MCF 10A (cell line): ENCODE measurements at regions of chr2 and their contacts with region 1.

Region 1: DNA sequence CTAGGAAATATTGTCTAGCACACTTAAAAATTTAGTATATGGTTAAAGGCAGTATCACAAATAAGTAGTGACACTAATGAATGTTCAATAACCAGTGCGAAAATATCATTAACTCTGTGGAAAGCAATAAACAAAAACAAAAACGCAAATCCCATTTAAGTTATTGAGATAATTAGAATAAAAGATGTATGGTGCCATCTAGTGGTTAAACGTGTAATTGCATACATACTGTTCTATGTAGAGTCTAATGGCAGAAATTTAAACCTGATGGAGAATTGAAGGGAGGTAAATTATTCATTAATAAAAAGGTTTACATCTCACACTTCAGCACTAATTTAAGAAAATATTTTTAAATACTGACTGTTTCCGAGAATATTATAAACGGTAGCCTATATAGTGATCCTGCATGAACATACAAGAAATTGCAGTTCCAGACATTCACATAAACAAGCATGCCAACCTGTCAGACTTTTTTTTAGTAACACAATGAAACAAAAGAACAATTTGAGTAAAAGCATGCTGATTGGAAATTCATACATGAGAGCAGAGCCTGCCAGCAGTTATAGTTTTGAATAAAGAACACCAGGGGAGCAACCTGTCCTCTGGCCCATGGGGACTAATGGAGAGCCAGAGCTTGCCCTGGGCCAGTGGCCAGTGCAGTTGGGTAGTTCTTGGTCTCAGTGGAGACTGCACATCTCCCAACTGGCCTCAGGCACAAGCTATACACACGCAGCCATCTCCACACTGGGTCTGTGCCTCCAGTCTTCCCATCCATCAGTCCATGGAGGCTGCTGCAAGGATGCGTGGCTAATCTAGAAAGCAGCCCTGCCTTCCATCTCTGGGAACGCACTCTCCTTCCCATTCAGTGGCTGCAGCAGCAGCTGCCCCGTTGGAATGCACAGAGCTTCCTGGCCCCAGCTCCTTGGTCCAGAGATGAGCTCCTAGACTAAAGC is 28.0 kb downstream of the GCG start:
- DNase-seq: peak; percentile 71
- H3K4me3 Mint-ChIP-seq: no peak overlapping the region
- H3K27ac Mint-ChIP-seq: no peak overlapping the region
- H3K4me1 Mint-ChIP-seq: no peaks in the 10 kb centered on the region
- H3K27me3 Mint-ChIP-seq: peaks cover 27% of the 10 kb centered on the region
- CTCF ChIP-seq: peak; percentile 49

Region 2: GRCh38 chr2:160238046-160238791 is 1885.9 kb before region 1 on chr2:
- CTCF ChIA-PET with region 1: no interaction called
- POLR2A ChIA-PET with region 1: no interaction called
- intact Hi-C with region 1: no loop called
- DNase-seq: no peak
- H3K4me3 Mint-ChIP-seq: peak overlapping the region; percentile 7
- H3K27ac Mint-ChIP-seq: peak overlapping the region; percentile 81
- H3K4me1 Mint-ChIP-seq: peaks cover 54% of the 10 kb centered on the region
- H3K27me3 Mint-ChIP-seq: no peaks in the 10 kb centered on the region
- CTCF ChIP-seq: no peak

Region 3: DNA sequence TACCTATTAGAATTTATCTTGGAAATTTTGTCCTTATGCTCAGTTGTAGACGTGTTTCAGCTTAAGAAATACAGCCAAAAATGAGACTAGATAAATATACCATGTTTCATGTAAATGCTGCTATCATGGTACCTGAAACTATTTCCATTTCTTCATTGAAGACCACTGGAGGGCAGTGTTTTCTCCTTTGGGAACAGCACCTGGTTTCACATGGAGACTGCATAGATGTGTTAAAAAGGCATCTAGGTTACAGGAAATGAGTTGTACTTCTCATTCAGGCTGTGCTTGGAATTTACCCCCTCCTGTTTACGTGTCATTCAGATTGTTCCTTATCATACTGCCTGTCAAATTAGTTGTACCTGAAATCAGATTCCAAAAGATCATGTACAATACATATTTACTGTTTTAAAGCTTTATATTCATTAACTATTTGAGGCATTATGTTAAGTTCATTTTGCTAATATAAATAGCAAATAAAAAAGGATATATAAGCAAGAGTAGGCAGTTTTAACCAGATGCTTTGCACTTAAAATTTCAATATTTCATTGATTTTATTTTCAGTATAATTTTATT is 873.1 kb before region 1 on chr2:
- CTCF ChIA-PET with region 1: interaction called, 11 read pairs
- POLR2A ChIA-PET with region 1: no interaction called
- intact Hi-C with region 1: no loop called
- DNase-seq: peak; percentile 75
- H3K4me3 Mint-ChIP-seq: no peak overlapping the region
- H3K27ac Mint-ChIP-seq: no peak overlapping the region
- H3K4me1 Mint-ChIP-seq: peaks cover 5% of the 10 kb centered on the region
- H3K27me3 Mint-ChIP-seq: peaks cover 11% of the 10 kb centered on the region
- CTCF ChIP-seq: peak; percentile 61

Region 4: DNA sequence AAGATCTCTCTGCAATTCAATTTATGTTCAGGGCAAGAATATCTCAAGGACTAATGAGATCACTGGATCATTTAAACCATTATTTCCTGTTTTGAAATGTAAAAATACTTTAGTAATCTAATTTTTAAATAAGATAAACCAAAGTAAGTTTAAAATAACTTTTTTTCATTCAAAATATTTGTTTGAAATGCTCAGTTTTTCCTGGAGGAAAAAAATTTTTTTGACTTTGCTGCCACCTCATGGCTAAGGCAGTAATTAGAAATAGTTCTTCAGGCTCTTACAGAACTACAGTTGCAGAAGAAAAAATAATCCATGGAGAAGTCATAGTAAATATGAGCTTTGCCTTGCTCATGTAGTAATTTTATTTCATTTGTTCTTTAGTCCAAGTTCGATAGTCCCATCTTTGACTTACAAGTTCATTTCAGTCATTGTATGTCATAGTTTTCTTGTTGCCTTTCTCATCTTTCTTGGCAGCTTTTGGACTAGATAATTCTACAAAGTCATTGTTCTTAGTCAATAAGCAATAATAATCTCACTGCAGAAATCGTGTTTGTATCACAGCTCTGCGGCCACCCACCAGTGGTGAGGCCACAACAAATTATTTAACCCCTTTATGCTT is 177.5 kb before region 1 on chr2:
- CTCF ChIA-PET with region 1: interaction called, 51 read pairs
- POLR2A ChIA-PET with region 1: interaction called, 5 read pairs
- intact Hi-C with region 1: loop called (anchors 5 kb)
- DNase-seq: peak; percentile 40
- H3K4me3 Mint-ChIP-seq: no peak overlapping the region
- H3K27ac Mint-ChIP-seq: no peak overlapping the region
- H3K4me1 Mint-ChIP-seq: no peaks in the 10 kb centered on the region
- H3K27me3 Mint-ChIP-seq: peaks cover 71% of the 10 kb centered on the region
- CTCF ChIP-seq: peak; percentile 71

Region 5: GRCh38 chr2:162007447-162008040 is 116.5 kb before region 1 on chr2:
- CTCF ChIA-PET with region 1: interaction called, 45 read pairs
- POLR2A ChIA-PET with region 1: no interaction called
- intact Hi-C with region 1: loop called (anchors 1 kb)
- DNase-seq: no peak
- H3K4me3 Mint-ChIP-seq: no peak overlapping the region
- H3K27ac Mint-ChIP-seq: no peak overlapping the region
- H3K4me1 Mint-ChIP-seq: no peaks in the 10 kb centered on the region
- H3K27me3 Mint-ChIP-seq: peaks cover 22% of the 10 kb centered on the region
- CTCF ChIP-seq: peak; percentile 72

Region 6: GRCh38 chr2:162029287-162029901 is 94.7 kb before region 1 on chr2:
- CTCF ChIA-PET with region 1: interaction called, 5 read pairs
- POLR2A ChIA-PET with region 1: interaction called, 3 read pairs
- intact Hi-C with region 1: loop called (anchors 1 kb)
- DNase-seq: peak; percentile 87
- H3K4me3 Mint-ChIP-seq: no peak overlapping the region
- H3K27ac Mint-ChIP-seq: no peak overlapping the region
- H3K4me1 Mint-ChIP-seq: peaks cover 26% of the 10 kb centered on the region
- H3K27me3 Mint-ChIP-seq: no peaks in the 10 kb centered on the region
- CTCF ChIP-seq: no peak

Region 7: GRCh38 chr2:162184821-162185446 is 60.9 kb after region 1 on chr2:
- CTCF ChIA-PET with region 1: interaction called, 12 read pairs
- POLR2A ChIA-PET with region 1: no interaction called
- intact Hi-C with region 1: no loop called
- DNase-seq: no peak
- H3K4me3 Mint-ChIP-seq: no peak overlapping the region
- H3K27ac Mint-ChIP-seq: no peak overlapping the region
- H3K4me1 Mint-ChIP-seq: no peaks in the 10 kb centered on the region
- H3K27me3 Mint-ChIP-seq: no peaks in the 10 kb centered on the region
- CTCF ChIP-seq: no peak